Activated T-helper 1 cell treated with anti-CD3 and anti-CD28 coated beads, Interleukin-12 subunit alpha, Interleukin-12 subunit beta, Interleukin-2, Interleukin-4 antibody, amounts not matched to agents 30 ng/mL and 10 ng/mL and 1 ng/mL, durations not matched to agents 14 hours and 24 hours and 36 hours (primary cell): ENCODE measurements at regions of chr1 and their contacts with region 1.

Region 1: GRCh38 chr1:91876040-91876470 is 9.9 kb downstream of the TGFBR3 start:
- DNase-seq: no peak
- H3K4me3 Mint-ChIP-seq: peak overlapping the region; percentile 37
- H3K27ac Mint-ChIP-seq: peak overlapping the region; percentile 71
- H3K4me1 Mint-ChIP-seq: peaks cover 72% of the 10 kb centered on the region
- H3K27me3 Mint-ChIP-seq: peaks cover 6% of the 10 kb centered on the region

Region 2: DNA sequence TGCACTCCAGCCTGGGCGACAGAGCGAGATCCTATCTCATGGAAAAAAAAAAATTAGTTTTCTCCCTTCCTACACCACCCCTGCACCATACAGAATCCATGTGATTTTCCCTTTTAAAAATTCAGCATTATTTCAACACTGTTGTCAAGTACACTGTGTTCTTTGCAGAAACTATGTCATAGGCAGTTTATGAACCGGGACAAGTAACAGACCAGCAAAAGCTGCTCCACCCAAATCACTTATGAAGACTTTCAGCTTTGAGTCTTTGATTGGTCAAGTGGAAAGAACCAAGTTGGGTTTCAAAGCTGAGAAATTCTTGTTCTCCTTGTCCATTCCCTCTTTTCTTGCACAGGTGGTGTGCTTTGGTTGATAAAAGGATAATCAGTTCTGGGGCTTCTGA is 202.4 kb before region 1 on chr1:
- intact Hi-C with region 1: loop called (anchors 1 kb)
- DNase-seq: no peak
- H3K4me3 Mint-ChIP-seq: no peak overlapping the region
- H3K27ac Mint-ChIP-seq: peak overlapping the region; percentile 50
- H3K4me1 Mint-ChIP-seq: peaks cover 39% of the 10 kb centered on the region
- H3K27me3 Mint-ChIP-seq: no peaks in the 10 kb centered on the region

Region 3: DNA sequence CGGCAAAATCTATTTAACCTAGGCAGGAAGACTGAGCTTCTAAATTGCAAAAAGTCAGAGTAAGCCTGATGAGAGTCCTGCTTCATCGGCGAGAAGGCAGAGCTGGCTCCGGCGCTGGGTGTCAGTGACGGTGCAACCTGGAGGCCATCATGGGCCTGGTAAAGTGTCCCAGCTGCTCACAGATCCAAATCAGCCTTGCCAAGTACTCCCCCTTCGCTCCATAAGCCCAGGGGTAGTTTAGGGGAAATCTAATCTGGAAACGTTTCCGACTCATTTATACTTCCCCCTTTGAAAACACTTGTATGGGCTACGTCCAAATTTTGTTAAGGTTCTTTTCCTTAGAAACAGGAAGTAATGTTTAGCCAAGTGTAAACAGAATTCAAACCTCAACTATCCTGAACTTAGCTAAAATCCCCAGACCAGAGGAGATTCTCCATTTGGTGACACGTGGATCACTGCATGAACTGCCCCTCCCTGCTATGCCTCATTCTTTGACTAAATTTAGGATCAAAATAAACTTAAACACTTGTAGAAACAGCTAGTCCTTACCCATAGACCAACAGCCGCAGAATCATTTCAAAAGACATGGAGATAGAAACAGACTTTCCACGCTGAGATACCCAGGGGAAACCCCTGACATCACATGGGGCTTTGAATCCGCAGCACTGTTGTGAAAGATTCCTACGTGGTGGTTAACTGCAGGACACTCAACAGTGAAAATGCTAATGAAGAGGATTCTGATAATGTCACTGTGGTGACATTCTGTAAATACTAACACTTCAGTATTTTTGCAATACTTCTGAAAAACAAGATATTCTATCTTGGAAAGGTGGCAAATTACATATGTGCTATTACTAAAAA is 162.8 kb before region 1 on chr1:
- intact Hi-C with region 1: loop called (anchors 1 kb)
- DNase-seq: peak; percentile 52
- H3K4me3 Mint-ChIP-seq: peak overlapping the region; percentile 61
- H3K27ac Mint-ChIP-seq: peak overlapping the region; percentile 94
- H3K4me1 Mint-ChIP-seq: peaks cover 59% of the 10 kb centered on the region
- H3K27me3 Mint-ChIP-seq: peaks cover 4% of the 10 kb centered on the region

Region 4: GRCh38 chr1:91929250-91929649 is 53.2 kb after region 1 on chr1:
- intact Hi-C with region 1: loop called (anchors 5 kb)
- DNase-seq: no peak
- H3K4me3 Mint-ChIP-seq: no peak overlapping the region
- H3K27ac Mint-ChIP-seq: no peak overlapping the region
- H3K4me1 Mint-ChIP-seq: peaks cover 11% of the 10 kb centered on the region
- H3K27me3 Mint-ChIP-seq: peaks cover 2% of the 10 kb centered on the region

Region 5: GRCh38 chr1:92690212-92690906 is 814.3 kb after region 1 on chr1:
- intact Hi-C with region 1: no loop called
- DNase-seq: no peak
- H3K4me3 Mint-ChIP-seq: no peak overlapping the region
- H3K27ac Mint-ChIP-seq: no peak overlapping the region
- H3K4me1 Mint-ChIP-seq: no peaks in the 10 kb centered on the region
- H3K27me3 Mint-ChIP-seq: peaks cover 6% of the 10 kb centered on the region